ENCODE measurements at regions of chr2 and their contacts with region 1.

Region 1: GRCh38 chr2:224646242-224646846 is 61.2 kb upstream of the CUL3 start:
- DNase-seq: no peak
- H3K4me3 ChIP-seq: no peak overlapping the region
- H3K27ac ChIP-seq: no peak overlapping the region
- H3K4me1 ChIP-seq: no peaks in the 10 kb centered on the region
- H3K27me3 ChIP-seq: no peaks in the 10 kb centered on the region
- CTCF ChIP-seq: no peak
- POLR2A ChIP-seq: no peak

Region 2: GRCh38 chr2:224260372-224261020 is 385.8 kb before region 1 on chr2:
- intact Hi-C with region 1: no loop called
- DNase-seq: no peak
- H3K4me3 ChIP-seq: no peak overlapping the region
- H3K27ac ChIP-seq: no peak overlapping the region
- H3K4me1 ChIP-seq: no peaks in the 10 kb centered on the region
- H3K27me3 ChIP-seq: no peaks in the 10 kb centered on the region
- CTCF ChIP-seq: no peak
- POLR2A ChIP-seq: no peak

Region 3: DNA sequence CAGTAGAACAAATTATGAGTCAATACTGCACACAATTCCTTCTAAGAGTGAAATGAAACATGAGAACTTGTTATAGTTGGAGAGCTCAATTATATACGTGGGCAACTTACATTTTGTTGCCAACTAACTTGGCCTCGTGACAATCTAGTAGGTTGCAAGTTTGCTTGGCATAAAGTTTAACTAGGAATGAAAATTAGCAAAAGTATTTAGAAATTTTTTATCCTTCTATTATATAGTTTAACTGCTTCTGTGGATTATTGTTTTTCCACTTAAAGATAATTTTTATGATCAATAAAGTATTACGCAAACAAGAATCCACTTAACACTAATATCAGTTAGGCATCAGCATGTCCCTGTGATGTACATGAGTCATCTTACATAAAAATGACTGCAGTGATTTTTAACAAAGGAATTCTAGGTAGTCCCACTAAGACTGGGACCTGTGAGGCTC is 285.5 kb before region 1 on chr2:
- intact Hi-C with region 1: loop called (anchors 5 kb)
- DNase-seq: no peak
- H3K4me3 ChIP-seq: no peak overlapping the region
- H3K27ac ChIP-seq: no peak overlapping the region
- H3K4me1 ChIP-seq: no peaks in the 10 kb centered on the region
- H3K27me3 ChIP-seq: no peaks in the 10 kb centered on the region
- CTCF ChIP-seq: no peak
- POLR2A ChIP-seq: no peak

Region 4: DNA sequence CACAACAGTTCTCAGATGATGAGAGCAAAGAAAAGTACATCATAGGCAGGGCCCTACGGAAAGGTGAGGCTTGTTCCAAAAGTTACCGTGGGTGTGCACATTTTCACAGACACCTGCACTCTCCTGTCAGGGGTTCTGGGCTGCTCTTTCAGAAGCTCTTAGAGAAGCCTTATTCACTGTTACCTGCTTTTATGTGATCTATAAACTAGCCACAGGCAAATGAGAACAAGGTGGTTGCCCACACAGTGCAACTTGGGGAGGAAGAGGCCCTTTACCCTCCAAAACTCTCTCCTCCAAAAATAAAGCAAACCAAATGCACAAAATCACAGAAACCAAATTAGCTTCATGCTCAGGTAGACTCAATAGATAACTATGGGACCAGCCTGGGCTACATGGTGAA is 50.1 kb before region 1 on chr2:
- intact Hi-C with region 1: no loop called
- DNase-seq: no peak
- H3K4me3 ChIP-seq: no peak overlapping the region
- H3K27ac ChIP-seq: no peak overlapping the region
- H3K4me1 ChIP-seq: no peaks in the 10 kb centered on the region
- H3K27me3 ChIP-seq: no peaks in the 10 kb centered on the region
- CTCF ChIP-seq: no peak
- POLR2A ChIP-seq: no peak

Measured in breast epithelium (tissue), 4 donors.